Mammary epithelial cell (primary cell): ENCODE measurements at regions of chr10 and their contacts with region 1.

Region 1: DNA sequence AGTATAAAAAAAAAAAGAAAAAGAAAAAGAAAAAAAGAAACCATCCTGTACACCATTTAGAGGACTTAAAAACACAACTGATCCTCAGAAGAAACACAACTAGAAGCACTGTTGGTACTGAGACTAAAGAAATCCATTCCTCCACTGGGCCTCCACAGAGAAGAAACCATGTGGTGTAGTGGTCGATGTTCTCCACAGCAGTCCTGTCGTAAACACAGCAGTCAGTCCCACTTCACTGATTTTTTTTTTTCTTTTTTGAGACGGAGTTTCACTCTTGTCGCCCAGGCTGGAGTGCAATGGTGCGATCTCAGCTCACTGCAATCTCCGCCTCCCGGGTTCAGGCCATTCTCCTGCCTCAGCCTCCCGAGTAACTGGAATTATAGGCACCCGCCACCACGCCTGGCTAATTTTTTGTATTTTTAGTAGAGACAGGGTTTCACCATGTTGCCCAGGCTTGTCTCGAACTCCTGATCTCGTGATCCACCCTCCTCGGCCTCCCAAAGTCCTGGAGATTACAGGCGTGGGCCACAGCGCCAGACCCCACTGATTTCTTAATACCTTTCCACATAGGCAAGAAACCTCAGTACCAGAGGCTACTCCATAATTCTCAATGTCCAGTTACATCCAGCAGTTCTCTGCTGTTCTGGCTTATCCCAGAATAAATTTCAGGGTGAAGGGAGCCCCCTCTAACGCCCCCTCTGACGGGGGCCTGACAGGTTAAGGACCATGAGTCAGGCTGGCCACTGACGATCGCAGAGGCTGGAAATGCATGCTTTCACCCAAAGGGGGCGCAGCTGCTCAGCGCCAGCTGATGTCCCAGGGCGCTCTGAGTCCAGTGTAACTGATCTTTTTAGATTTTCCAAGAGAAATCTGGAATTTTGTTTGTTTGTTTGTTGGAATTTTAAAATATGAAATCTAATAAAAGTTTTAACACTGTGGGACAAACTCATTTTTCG is 24.8 kb upstream of the FFAR4 start:
- DNase-seq: no peak
- H3K4me3 ChIP-seq: no peak overlapping the region
- H3K27ac ChIP-seq: no peak overlapping the region
- H3K4me1 ChIP-seq: no peaks in the 10 kb centered on the region
- H3K27me3 ChIP-seq: no peaks in the 10 kb centered on the region
- CTCF ChIP-seq: peak; percentile 69 to 75

Region 2: DNA sequence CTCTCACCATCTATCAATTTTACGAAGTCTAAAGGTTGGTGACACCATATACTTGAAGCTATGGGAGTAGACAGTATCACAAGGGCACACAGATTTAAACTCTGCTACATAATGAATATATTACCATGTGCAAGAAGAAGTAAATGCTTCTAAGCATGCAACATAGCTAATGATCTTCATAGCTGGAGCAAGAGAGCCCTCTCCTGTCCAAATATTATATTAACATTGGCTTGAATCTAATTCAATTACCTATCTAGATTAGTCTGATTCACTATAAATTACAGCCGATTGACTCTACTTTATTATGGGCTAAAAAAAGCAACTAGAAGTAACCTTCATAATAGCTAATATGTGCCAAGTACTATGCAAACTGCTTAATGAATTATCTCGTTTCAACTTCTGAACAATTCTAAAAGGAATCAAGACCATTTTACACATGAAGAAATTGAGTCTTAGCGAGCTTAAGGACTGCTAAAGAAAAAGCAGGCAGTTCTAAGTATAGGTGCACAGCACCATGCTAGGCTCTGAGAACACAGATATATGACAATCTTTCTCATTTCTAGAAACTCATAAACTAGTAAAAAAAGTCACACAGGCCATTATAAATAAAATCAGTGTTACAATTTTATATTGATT is 138.8 kb after region 1 on chr10:
- CTCF ChIA-PET with region 1: no interaction called
- dilution Hi-C with region 1: no loop called
- in situ Hi-C with region 1: loop called in 1 of 2 experiments (anchors 5 kb)
- intact Hi-C with region 1: loop called (anchors 1 kb)
- DNase-seq: peak; percentile 35
- H3K4me3 ChIP-seq: no peak overlapping the region
- H3K27ac ChIP-seq: no peak overlapping the region
- H3K4me1 ChIP-seq: no peaks in the 10 kb centered on the region
- H3K27me3 ChIP-seq: no peaks in the 10 kb centered on the region
- CTCF ChIP-seq: peak; percentile 24 to 44